PC-3 (cell line): ENCODE measurements at regions of chr12 and their contacts with region 1.

Region 1: GRCh38 chr12:55659486-55660385 is 23.0 kb downstream of the OR10P1 start:
- DNase-seq: peak; percentile 56
- ATAC-seq: peak; percentile 77
- H3K4me3 ChIP-seq: no peak overlapping the region
- H3K27ac ChIP-seq: no peak overlapping the region
- H3K4me1 ChIP-seq: no peaks in the 10 kb centered on the region
- H3K27me3 ChIP-seq: no peaks in the 10 kb centered on the region
- CTCF ChIP-seq: peak; percentile 73

Region 2: DNA sequence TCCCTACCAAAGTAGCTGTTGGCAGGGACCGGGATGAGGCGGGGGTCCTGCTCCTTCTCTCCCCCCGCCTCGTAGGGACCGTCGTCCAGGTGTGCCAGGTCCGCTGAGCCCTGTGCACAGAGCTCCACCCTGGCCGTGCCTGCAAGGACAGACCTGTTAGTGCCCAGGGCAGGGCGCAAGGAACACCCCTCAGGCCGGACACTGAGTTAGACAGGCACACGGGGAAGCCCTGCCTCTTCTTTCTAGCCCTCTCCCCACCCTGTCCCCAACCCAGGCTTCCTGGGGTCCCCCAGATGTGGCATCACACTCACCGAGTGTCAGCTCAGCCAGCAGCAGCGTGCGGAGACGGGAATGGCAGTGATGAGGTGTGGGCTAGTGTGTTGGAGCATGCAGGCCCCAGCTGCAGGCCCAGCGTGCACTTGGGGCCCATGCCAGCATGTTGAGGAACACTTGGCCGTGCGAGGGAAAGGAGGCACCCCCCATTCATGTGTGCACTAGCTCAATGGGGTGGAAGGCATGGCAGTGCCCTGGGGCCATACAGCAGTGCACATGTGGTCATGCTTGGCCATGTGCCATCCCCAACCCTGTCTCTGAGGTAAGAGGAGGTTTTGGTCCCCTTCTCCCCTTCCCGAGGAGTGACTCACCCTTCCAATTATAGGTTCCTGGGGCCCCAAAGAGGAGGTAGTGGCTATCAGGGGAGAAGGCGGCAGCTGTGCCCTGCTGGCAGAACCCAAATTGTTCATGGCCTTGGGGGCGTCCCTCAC is 40.7 kb after region 1 on chr12:
- CTCF ChIA-PET with region 1: no interaction called
- POLR2A ChIA-PET with region 1: no interaction called
- intact Hi-C with region 1: no loop called
- DNase-seq: peak; percentile 17
- ATAC-seq: no peak
- H3K4me3 ChIP-seq: no peak overlapping the region
- H3K27ac ChIP-seq: no peak overlapping the region
- H3K4me1 ChIP-seq: no peaks in the 10 kb centered on the region
- H3K27me3 ChIP-seq: no peaks in the 10 kb centered on the region
- CTCF ChIP-seq: no peak

Region 3: DNA sequence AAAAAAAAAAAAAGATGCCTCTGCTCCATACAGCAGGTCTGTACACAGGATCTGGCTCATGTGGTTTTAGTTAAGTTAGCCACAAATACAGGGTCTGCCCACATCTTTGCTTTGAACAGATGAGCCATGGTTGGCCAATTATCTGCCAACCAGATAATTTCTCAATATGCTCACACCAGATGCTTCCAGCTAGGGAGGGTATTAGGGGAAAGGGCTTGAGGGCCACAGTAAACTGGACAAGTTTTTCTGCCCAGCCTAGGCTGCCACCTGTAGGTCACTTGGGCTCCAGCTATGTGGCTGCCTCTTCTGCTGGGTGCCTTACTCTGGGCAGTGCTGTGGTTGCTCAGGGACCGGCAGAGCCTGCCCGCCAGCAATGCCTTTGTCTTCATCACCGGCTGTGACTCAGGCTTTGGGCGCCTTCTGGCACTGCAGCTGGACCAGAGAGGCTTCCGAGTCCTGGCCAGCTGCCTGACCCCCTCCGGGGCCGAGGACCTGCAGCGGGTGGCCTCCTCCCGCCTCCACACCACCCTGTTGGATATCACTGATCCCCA is 61.2 kb after region 1 on chr12:
- CTCF ChIA-PET with region 1: no interaction called
- POLR2A ChIA-PET with region 1: no interaction called
- intact Hi-C with region 1: loop called (anchors 1 kb)
- DNase-seq: peak; percentile 98
- ATAC-seq: peak; percentile 81
- H3K4me3 ChIP-seq: peak overlapping the region; percentile 31; the same call in 1 of the 2 replicates
- H3K27ac ChIP-seq: peak overlapping the region; percentile 52
- H3K4me1 ChIP-seq: peaks cover 64% of the 10 kb centered on the region
- H3K27me3 ChIP-seq: no peaks in the 10 kb centered on the region
- CTCF ChIP-seq: peak; percentile 83